H1 (cell line): ENCODE measurements at regions of chr17 and their contacts with region 1.

Region 1: DNA sequence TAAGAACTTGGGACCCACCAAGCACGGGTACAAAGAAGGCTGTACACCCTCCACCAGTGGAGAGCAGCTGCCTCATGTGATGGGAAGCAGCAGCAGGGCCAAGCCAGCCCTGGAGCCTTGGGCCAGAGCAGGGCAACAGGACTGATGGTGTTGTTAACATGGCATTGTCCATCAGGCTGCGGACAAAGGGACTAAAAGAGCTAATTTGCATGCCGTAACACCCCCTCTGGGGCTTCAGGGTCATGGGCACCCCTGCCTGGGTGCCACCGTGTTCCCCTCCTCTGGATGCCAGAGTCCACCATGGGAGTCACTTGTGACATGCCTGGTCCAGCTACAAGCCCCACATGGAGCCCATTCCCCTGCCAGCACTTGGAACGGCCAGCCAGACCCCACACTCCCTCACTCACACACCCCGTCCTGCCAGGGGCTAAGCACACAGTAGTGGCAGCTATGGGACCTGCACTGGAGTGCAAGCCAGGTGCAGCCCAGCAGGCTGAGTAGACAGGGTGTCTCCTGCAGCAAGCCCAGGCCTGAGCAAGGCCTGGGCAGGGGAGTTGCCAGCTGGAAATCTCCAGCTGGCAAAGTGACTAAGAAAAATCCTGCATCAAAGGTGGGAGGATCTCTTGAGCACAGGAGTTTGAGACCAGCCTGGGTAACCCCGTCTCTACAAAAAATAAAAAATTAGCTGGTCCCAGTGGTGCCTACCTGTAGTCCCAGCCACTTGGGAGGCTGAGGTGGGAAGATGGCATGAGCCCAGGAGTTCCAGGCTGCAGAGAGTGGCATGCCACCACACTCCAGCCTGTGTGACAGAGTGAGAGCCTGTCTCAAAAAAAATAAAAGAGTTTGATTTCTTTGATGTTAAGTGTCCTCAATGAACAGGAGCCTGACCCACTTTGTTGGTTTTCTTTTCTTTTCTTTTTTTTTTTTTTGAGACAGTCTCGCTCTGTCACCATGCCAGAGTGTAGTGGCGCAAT is 33.7 kb downstream of the NOL11 start:
- DNase-seq: peak in 1 of 2 experiments; percentile 61
- H3K4me3 ChIP-seq: no peak overlapping the region
- H3K27ac ChIP-seq: peak overlapping the region; percentile 60
- H3K4me1 ChIP-seq: peaks cover 0 to 21% (median 18%) of the 10 kb centered on the region in 4 experiments; a peak in 6 of 7 replicates
- H3K27me3 ChIP-seq: no peaks in the 10 kb centered on the region
- CTCF ChIP-seq: no peak
- EP300 ChIP-seq: no peak
- POLR2A ChIP-seq: no peak
- RAD21 ChIP-seq: no peak

Region 2: DNA sequence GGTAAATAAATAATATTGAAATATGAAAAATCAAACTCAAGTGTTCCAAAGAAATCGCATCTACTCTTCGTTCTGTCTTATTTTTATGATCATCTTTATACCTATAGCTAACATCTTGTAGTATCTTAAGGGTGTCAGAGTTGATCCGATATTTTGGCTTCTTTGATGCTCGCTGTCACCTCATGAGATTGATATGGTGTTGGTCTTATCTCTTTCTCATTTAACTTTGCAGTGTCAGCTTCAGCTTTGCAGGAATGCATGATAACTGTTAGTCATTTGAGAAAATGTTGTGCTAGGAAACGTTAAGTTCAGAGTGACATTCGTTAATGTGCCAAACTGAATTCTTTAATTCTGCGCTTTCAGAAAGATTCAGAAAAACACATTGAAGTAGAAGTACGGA is 14.2 kb before region 1 on chr17:
- CTCF ChIA-PET with region 1: interaction called, 13 read pairs
- POLR2A ChIA-PET with region 1: interaction called, 6 read pairs
- DNase-seq: no peak
- H3K4me3 ChIP-seq: no peak overlapping the region
- H3K27ac ChIP-seq: no peak overlapping the region
- H3K4me1 ChIP-seq: peaks cover 2 to 10% (median 3%) of the 10 kb centered on the region in 4 experiments; a peak in 4 of 7 replicates
- H3K27me3 ChIP-seq: no peaks in the 10 kb centered on the region
- CTCF ChIP-seq: no peak
- EP300 ChIP-seq: no peak
- POLR2A ChIP-seq: no peak
- RAD21 ChIP-seq: no peak